Vagina (tissue), 2 donors: ENCODE measurements at regions of chr15 and their contacts with region 1.

Region 1: DNA sequence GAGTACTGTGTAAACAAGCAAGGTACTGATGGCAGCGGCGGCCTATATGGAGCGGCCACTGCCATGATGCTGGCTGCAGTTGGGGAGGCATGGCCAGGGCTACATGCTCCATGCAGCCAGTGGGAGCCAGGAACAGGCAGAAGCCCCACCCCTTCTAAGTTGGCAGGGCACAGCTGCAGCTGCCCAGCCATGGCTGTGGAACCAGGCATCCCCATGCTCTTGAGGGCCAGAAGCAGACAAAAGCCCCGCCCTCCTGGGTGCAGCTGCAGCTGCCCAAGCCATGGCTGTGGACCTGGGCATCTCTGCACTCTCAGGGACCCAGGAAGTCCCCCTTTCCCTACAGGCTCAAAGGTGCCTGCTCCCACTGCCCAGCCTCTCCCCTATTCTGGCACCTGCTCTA is 150.9 kb downstream of the FMN1 start:
- DNase-seq: no peak
- H3K4me3 ChIP-seq: no peak overlapping the region
- H3K27ac ChIP-seq: no peak overlapping the region
- H3K4me1 ChIP-seq: no peaks in the 10 kb centered on the region
- H3K27me3 ChIP-seq: no peaks in the 10 kb centered on the region
- CTCF ChIP-seq: no peak
- POLR2A ChIP-seq: no peak

Region 2: GRCh38 chr15:32669896-32670619 is 373.6 kb before region 1 on chr15:
- intact Hi-C with region 1: no loop called
- DNase-seq: no peak
- H3K4me3 ChIP-seq: no peak overlapping the region
- H3K27ac ChIP-seq: peak overlapping the region; percentile 78
- H3K4me1 ChIP-seq: peaks cover 27% of the 10 kb centered on the region
- H3K27me3 ChIP-seq: no peaks in the 10 kb centered on the region
- CTCF ChIP-seq: no peak
- POLR2A ChIP-seq: no peak

Region 3: DNA sequence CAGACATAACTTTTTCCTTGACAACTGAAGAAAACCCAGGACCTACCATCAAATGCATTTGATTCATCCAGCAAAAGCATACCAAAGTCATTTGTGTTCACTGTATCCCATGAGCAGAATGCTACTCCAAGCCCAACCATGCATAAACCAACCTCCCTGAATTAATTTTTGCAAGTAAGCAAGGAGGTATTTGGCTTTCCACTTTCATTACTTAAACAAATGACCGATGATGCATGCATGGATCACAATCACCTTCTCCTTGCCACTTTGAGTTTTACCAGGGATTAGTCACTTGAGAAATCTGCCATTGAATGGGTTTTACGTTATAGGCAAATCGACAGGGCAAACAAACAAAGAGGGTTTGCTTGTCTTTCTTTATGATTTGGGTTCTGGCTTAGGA is 63.9 kb before region 1 on chr15:
- intact Hi-C with region 1: no loop called
- DNase-seq: no peak
- H3K4me3 ChIP-seq: no peak overlapping the region
- H3K27ac ChIP-seq: no peak overlapping the region
- H3K4me1 ChIP-seq: no peaks in the 10 kb centered on the region
- H3K27me3 ChIP-seq: no peaks in the 10 kb centered on the region
- CTCF ChIP-seq: no peak
- POLR2A ChIP-seq: no peak

Region 4: DNA sequence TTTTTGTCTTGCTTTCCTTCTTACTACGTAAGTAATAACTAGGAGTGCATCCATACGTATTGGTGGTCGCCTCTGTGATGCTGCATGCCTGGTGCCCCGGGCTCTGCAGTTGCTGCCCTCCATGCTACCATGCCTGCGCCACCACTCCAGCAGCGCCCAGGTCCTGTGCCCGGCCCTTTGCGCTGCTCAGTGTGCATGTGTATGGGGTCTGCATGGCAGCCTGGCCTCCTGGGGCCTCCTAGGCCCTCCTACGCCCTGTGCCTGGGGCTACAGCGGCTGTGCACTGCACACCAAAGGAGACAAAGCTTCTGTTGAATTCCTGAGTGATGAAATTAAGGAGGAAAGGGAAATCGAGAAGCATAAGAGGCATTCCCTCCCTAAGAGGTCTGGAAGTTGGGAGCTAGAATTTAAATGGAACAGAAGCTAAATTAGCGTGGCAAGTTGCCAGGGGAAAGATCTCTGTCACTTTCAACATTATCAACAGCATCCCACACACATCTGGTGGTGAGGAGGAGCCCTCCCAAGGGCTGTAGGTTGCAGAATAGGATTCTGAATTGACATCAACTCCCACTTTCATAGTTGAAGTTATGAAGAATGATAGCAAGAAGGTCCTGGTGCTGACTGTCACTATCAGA is 649.6 kb after region 1 on chr15:
- intact Hi-C with region 1: loop called (anchors 5 kb)
- DNase-seq: no peak
- H3K4me3 ChIP-seq: no peak overlapping the region
- H3K27ac ChIP-seq: no peak overlapping the region
- H3K4me1 ChIP-seq: no peaks in the 10 kb centered on the region
- H3K27me3 ChIP-seq: no peaks in the 10 kb centered on the region
- CTCF ChIP-seq: no peak
- POLR2A ChIP-seq: no peak